AG04450 (cell line): ENCODE measurements at regions of chr7 and their contacts with region 1.

Region 1: GRCh38 chr7:36315309-36316133 is 74.1 kb upstream of the ANLN start:
- DNase-seq: no peak
- H3K4me3 ChIP-seq: no peak overlapping the region
- H3K27ac ChIP-seq: no peak overlapping the region
- H3K27me3 ChIP-seq: peaks cover 7% of the 10 kb centered on the region
- CTCF ChIP-seq: no peak

Region 2: DNA sequence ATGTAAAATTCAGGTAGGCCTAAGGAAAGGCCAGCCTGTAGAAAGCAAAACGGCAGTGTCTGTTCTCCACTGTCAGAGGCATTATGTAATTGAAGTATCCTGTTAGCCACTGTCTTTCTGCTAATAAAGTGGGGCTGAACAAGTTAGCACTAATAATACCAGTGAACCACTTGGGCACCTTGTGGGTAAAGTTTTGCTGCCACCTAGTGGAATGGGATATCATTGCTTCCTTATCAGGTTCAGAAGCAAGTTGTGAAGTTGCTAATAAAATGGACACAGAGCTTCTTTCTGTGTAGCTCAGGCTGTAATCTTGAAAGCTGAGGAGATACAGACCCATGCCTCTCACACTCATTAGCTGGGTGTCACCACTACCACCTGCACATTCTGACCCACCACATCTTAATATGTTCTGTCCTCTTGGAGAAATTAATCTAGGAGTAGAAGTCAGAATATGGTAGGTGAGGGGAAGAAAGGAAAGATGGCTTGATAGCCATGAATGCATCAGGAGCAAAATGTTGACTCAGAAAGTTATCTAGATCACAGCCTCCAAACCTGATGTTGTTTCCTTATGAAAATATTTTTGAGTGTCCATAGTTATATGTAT is 339.6 kb before region 1 on chr7:
- CTCF ChIA-PET with region 1: interaction called, 10 read pairs
- POLR2A ChIA-PET with region 1: no interaction called
- DNase-seq: peak; percentile 56
- H3K4me3 ChIP-seq: no peak overlapping the region
- H3K27ac ChIP-seq: no peak overlapping the region
- H3K27me3 ChIP-seq: peaks cover 39% of the 10 kb centered on the region
- CTCF ChIP-seq: peak; percentile 92

Region 3: DNA sequence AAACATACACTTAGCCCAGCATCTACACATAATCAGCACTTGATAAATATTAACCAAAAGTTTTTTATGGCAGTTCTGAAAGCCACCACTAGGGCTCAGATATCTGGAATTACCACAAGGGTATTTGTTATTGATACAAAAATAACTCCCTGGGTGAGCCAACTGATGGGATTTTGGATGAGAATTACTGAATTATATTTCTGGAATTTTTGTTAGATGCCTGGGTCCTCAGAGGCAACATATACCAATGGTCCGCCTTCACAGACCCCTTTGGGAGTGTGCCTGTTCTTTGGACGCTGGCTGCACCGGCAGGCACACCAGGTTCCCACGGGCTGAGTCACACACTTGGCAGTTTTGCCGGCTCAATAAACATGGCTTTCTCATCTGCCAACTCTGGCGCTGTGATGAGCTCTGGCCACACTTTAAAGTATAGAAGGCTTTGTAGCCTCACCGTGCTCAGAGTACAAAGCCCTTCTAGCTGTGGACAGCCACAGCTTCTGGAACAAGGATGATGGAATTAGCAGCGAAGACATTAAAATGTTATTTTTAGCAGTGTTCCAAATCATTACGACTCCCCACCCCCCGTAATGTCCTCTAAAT is 187.0 kb before region 1 on chr7:
- CTCF ChIA-PET with region 1: interaction called, 10 read pairs
- POLR2A ChIA-PET with region 1: no interaction called
- DNase-seq: peak; percentile 73
- H3K4me3 ChIP-seq: no peak overlapping the region; the same call in 1 of the 2 replicates
- H3K27ac ChIP-seq: peak overlapping the region; percentile 55
- H3K27me3 ChIP-seq: no peaks in the 10 kb centered on the region
- CTCF ChIP-seq: peak; percentile 79

Region 4: GRCh38 chr7:36291387-36292316 is 23.9 kb before region 1 on chr7:
- CTCF ChIA-PET with region 1: interaction called, 26 read pairs
- POLR2A ChIA-PET with region 1: no interaction called
- DNase-seq: peak; percentile 70
- H3K4me3 ChIP-seq: peak overlapping the region; percentile 29
- H3K27ac ChIP-seq: peak overlapping the region; percentile 90
- H3K27me3 ChIP-seq: no peaks in the 10 kb centered on the region
- CTCF ChIP-seq: peak; percentile 97

Region 5: GRCh38 chr7:36336390-36336789 is 20.9 kb after region 1 on chr7:
- CTCF ChIA-PET with region 1: interaction called, 24 read pairs
- POLR2A ChIA-PET with region 1: no interaction called
- DNase-seq: no peak
- H3K4me3 ChIP-seq: no peak overlapping the region
- H3K27ac ChIP-seq: no peak overlapping the region
- H3K27me3 ChIP-seq: peaks cover 8% of the 10 kb centered on the region
- CTCF ChIP-seq: no peak